IMR-90 (cell line): ENCODE measurements at regions of chr7 and their contacts with region 1.

Region 1: GRCh38 chr7:101815835-101816493 is 1.5 kb upstream of the CUX1 start:
- DNase-seq: peak; percentile 79
- ATAC-seq: peak; percentile 74
- H3K4me3 ChIP-seq: peak overlapping the region; percentile 68
- H3K27ac ChIP-seq: peak overlapping the region; percentile 53
- H3K4me1 ChIP-seq: peaks cover 9% of the 10 kb centered on the region
- H3K27me3 ChIP-seq: no peaks in the 10 kb centered on the region
- CTCF ChIP-seq: no peak
- POLR2A ChIP-seq: peak; percentile 53
- RAD21 ChIP-seq: peak; percentile 33

Region 2: DNA sequence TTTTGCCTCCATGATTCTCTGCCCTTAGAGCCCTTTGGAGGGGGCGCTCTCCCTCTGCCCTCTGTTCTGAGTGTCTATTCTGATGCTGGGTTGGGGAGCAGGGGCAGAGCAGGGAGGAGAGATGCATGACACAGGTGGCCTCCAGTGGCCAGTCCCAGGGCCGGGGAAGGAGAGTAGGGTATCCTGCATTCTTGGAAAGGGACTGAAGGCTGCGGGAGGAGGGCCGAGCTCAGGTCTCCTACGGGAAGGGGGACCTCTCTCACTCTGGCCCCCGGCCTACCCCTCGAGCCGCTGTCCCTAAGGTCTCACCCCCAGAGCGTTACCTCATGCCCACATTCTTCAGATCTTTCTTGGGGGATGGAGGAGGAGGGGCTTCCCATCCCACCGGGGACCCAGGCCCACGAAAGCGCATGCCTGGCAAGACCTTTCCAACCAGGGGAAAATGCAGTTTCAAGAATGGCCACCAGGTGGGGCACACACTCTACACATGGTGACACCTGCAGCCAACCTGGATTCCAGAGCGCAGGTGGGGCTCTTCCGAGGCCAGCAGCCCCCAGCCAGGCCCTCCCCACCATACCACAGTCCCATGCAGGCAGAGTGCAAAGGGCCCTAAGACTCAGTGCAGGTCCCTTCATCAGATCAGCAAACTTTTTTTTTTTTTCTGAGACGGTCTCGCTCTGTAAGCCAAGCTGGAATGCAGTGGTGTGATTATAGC is 273.3 kb before region 1 on chr7:
- CTCF ChIA-PET with region 1: no interaction called
- POLR2A ChIA-PET with region 1: no interaction called
- dilution Hi-C with region 1: no loop called
- in situ Hi-C with region 1: no loop called
- intact Hi-C with region 1: loop called (anchors 10 kb)
- DNase-seq: peak; percentile 29
- ATAC-seq: peak; percentile 46; the same call in 1 of the 2 replicates
- H3K4me3 ChIP-seq: no peak overlapping the region
- H3K27ac ChIP-seq: no peak overlapping the region
- H3K4me1 ChIP-seq: peaks cover 2% of the 10 kb centered on the region; the same call in 1 of the 2 replicates
- H3K27me3 ChIP-seq: no peaks in the 10 kb centered on the region; the same call in 1 of the 2 replicates
- CTCF ChIP-seq: peak; percentile 80
- POLR2A ChIP-seq: no peak
- RAD21 ChIP-seq: peak; percentile 86

Region 3: DNA sequence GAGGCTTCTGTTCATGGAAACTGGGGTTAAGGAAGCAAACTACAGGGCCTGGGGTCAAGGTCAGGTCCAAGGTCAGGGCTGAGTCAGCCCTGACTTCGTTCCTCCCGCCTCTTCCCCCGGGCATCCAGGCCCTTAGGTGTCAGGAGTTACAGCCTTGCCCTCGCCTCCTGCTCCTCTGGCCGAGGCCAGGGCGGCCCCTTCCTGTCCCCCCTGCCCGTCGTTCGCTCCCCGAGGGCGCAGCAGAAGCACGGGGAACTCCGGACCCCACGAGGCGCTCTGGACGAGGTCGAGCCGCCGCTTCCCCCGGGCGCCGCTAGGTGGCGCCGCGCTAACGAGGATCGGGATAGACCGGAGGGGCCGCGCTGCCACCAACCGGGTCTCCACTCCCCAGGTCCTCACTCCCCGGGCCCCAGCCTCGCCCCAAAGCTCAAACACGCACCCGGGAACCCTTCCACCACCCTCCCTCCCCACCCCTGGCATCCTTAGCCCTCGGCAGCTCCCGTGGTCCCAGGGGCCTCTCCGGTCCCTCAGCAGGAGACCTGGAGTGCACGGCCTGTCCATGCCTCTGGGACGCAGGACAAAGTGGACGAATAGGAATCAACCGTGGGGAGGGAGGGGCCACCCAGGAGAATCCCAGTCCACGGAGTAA is 127.7 kb before region 1 on chr7:
- CTCF ChIA-PET with region 1: interaction called, 5 read pairs
- POLR2A ChIA-PET with region 1: no interaction called
- dilution Hi-C with region 1: no loop called
- in situ Hi-C with region 1: loop called (anchors 5 kb)
- intact Hi-C with region 1: loop called (anchors 1 kb)
- DNase-seq: peak; percentile 46
- ATAC-seq: peak; percentile 98
- H3K4me3 ChIP-seq: peak overlapping the region; percentile 33
- H3K27ac ChIP-seq: no peak overlapping the region; the same call in 1 of the 2 replicates
- H3K4me1 ChIP-seq: peaks cover 5% of the 10 kb centered on the region
- H3K27me3 ChIP-seq: no peaks in the 10 kb centered on the region; the same call in 1 of the 2 replicates
- CTCF ChIP-seq: peak; percentile 87
- POLR2A ChIP-seq: 0 out of 2 replicates have a peak, but pooled peaks have one; percentile 37
- RAD21 ChIP-seq: peak; percentile 87

Region 4: DNA sequence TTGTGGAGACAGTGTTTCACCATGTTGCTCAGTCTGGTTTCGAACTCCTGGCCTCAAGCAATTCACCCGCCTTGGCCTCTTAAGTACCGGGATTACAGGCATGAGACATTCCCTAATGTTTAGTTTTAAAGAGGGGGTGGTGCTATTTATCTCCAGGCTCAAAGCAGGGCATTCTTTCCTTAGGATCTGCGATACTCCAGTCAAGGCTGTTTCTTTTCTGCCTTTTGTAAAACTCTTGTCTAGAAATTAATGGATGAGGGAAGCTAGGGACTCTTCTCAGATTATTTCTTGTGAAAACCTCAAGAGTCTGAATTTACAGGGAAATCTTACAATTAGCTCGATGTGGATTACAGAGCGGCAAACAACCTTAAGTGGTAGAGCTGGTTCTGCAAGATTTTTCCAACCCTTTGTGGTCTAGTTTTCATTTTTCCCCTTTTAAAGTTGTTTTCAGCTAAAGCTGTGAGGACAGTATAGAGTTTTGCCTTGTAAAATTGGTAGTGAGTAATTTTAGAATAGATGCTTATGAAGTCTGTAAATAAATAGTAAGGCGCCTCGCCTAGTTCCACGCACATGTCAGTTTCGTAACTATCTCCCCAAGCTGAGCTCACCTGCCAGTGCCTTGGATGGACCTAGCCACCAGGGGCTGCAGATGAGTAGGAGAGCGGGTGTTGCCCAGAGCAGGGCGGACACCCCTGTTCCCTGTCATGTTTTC is 54.5 kb after region 1 on chr7:
- CTCF ChIA-PET with region 1: no interaction called
- POLR2A ChIA-PET with region 1: no interaction called
- dilution Hi-C with region 1: no loop called
- in situ Hi-C with region 1: no loop called
- intact Hi-C with region 1: no loop called
- DNase-seq: peak; percentile 59
- ATAC-seq: peak; percentile 63
- H3K4me3 ChIP-seq: no peak overlapping the region
- H3K27ac ChIP-seq: no peak overlapping the region
- H3K4me1 ChIP-seq: peaks cover 30% of the 10 kb centered on the region
- H3K27me3 ChIP-seq: no peaks in the 10 kb centered on the region
- CTCF ChIP-seq: 0 out of 2 replicates have a peak, but pooled peaks have one; percentile 10
- POLR2A ChIP-seq: no peak
- RAD21 ChIP-seq: no peak

Region 5: DNA sequence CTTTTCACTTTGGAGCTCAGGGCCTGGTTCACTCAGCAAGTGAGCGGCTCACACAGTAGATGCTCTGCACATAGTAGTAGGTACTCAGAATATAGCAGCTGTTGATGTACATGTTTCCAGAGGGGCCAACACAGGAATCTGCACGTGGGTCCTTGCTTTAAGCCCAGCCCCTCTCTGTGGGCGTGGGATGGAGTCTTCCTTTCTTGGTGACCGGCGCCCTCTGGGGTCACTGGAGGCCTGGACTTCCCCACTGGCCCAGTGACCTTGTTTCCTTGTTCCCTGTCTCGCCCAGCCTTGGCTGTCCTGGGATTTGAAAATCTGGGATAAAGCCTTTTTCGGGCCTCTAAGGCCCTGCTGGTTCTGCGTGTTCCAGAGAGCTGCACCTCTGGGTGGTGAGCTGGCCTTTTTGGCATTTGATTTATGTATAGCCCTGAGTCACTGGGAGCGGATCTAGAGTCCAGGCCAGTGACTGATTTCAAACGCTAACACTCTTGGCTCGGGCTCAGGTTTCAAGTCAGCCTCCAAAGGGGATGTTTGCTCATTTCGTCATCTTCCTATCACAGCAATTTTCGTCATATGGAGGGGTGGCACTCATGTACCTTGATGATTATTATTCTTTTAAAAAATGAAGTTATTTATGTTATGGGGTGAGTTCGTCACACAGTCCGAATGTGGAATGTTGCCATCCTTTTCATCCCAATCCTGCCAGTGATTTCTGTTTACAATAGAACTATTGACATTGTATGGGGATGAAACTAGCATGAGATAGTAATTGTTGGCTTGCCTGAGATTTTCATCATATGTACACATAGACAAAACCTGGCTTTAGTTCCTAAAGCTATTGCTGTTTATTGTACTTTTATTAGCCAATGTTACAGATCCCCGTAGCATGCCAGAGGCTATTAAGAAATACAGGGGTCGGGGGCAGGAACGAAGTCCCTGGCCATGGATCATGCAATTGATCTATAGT is 66.9 kb after region 1 on chr7:
- CTCF ChIA-PET with region 1: interaction called, 4 read pairs
- POLR2A ChIA-PET with region 1: interaction called, 3 read pairs
- dilution Hi-C with region 1: no loop called
- in situ Hi-C with region 1: no loop called
- intact Hi-C with region 1: loop called (anchors 5 kb)
- DNase-seq: peak; percentile 100
- ATAC-seq: peak; percentile 88
- H3K4me3 ChIP-seq: no peak overlapping the region
- H3K27ac ChIP-seq: peak overlapping the region; percentile 93
- H3K4me1 ChIP-seq: peaks cover 27% of the 10 kb centered on the region
- H3K27me3 ChIP-seq: no peaks in the 10 kb centered on the region
- CTCF ChIP-seq: no peak
- POLR2A ChIP-seq: peak; percentile 40; the same call in 1 of the 2 replicates
- RAD21 ChIP-seq: peak; percentile 28

Region 6: DNA sequence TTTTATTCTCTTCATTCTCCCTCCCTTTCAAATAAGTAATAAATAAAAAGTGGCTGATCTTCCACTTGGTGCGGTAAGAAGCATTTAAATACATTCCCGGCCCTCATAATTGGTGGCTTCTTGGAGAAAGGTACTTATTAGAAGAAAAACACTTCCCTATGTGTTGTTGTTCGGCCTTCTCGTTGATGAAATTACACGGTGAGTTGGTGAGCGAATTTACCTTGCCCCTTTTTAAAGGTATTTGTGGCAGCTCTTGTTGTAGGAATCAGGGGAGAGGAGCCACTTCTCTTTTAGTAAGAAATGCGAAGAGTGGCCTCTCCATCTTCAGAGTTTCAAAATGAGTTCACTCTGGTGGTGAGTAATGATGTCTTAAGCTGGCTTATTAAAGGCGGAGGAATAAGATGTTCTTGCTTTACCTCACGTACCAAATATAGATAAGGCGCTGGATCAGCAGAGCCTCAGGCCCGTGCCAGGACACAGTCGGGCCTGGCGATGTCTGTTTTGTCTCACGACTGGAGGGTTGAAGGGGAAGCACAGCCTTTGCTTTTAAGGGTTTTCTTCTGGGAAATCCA is 137.4 kb after region 1 on chr7:
- CTCF ChIA-PET with region 1: no interaction called
- POLR2A ChIA-PET with region 1: no interaction called
- dilution Hi-C with region 1: no loop called
- in situ Hi-C with region 1: no loop called
- intact Hi-C with region 1: loop called (anchors 5 kb)
- DNase-seq: peak; percentile 92
- ATAC-seq: peak; percentile 86
- H3K4me3 ChIP-seq: no peak overlapping the region
- H3K27ac ChIP-seq: peak overlapping the region; percentile 81
- H3K4me1 ChIP-seq: peaks cover 18% of the 10 kb centered on the region
- H3K27me3 ChIP-seq: no peaks in the 10 kb centered on the region
- CTCF ChIP-seq: no peak
- POLR2A ChIP-seq: no peak; the same call in 1 of the 2 replicates
- RAD21 ChIP-seq: peak; percentile 40

Region 7: DNA sequence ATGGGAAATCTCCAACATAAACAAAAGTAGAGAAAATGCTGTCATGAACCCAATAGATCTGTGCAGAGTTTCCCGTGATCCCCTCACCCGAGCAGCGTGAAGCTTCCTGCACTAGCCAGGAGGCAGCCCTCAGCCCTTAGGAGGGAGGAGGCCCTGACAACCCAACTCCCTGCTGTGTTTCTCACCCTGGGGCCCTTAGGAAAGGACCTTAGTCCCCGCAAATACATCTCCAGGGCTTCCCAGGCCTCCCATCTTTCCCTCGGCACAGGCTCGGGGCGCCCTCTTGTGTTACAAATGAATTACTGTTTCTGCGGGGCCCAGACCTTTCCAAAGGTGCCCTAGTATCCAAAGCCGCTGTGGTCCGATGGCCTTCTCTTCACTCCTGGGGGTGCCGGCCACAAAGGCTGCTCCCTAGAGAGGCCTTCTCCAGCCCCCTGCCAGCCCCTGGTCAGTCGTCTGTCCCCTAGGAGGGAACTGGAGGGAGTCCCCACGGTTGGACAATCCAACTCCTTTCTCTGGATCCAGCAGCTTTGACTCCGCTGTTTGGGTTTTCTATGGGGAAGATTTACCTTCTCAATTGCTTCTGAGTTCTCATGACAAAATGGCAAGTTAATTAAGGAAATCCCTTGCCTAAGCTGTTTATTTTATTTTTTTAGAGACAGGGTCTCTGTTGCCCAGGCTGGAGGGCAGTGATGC is 420.8 kb after region 1 on chr7:
- CTCF ChIA-PET with region 1: no interaction called
- POLR2A ChIA-PET with region 1: no interaction called
- dilution Hi-C with region 1: no loop called
- in situ Hi-C with region 1: loop called (anchors 10 kb)
- intact Hi-C with region 1: loop called (anchors 2 kb)
- DNase-seq: peak; percentile 56
- ATAC-seq: peak; percentile 95
- H3K4me3 ChIP-seq: no peak overlapping the region
- H3K27ac ChIP-seq: no peak overlapping the region
- H3K4me1 ChIP-seq: peaks cover 2% of the 10 kb centered on the region; the same call in 1 of the 2 replicates
- H3K27me3 ChIP-seq: no peaks in the 10 kb centered on the region
- CTCF ChIP-seq: peak; percentile 85
- POLR2A ChIP-seq: no peak
- RAD21 ChIP-seq: peak; percentile 95